Naive thymus-derived CD8-positive, alpha-beta T cell (primary cell): ENCODE measurements at regions of chr5 and their contacts with region 1.

Region 1: GRCh38 chr5:143033535-143034250 is 263.5 kb downstream of the ARHGAP26 start:
- DNase-seq: no peak
- ATAC-seq: no peak
- H3K4me3 Mint-ChIP-seq: no peak overlapping the region
- H3K27ac Mint-ChIP-seq: no peak overlapping the region
- H3K4me1 Mint-ChIP-seq: peaks cover 17 to 46% (median 33%) of the 10 kb centered on the region in 4 donors
- H3K27me3 Mint-ChIP-seq: no peaks in the 10 kb centered on the region

Region 2: DNA sequence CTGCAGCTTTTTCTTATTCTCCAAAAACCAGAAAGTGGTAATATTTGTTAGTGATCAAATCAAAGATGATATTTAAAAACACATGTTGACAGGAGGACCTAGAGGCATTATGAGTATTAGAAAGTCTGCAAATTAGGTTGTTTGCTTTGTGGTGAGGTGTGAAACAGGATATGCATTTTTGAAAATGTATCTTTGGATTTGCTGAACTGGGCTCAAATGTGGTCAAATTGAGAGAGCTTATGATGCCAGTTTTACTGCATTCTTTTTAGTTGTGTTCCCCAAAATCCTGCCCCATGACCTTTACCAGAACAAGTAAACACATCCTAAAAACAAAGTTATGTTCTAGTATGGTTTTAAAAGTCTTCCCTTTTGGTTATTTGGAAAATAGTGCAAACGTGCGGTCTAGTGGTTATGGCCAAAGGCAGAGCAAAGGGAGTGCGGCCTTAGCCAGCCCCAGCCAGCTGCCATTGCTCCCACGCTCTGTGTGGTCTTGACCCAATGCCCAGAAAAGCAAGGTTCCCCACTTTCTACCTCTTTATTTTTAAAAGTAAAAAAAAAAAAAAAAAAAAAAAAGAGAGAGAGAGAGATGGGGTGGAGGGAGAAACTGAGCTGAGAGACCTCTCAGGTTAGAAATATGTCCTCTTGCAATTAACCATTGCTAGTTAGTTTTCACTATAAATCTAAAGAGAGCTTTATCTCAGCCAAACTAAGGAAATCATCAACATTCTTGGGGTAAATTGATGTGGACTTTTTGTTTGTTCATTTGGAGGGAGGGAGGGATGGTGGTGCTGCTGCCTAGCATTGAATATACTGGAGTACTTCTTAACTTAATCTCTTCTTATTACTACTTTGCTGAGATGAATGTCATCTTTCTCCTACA is 86.9 kb before region 1 on chr5:
- POLR2A ChIA-PET with region 1: interaction called, 10 read pairs
- DNase-seq: no peak
- ATAC-seq: no peak
- H3K4me3 Mint-ChIP-seq: no peak overlapping the region
- H3K27ac Mint-ChIP-seq: peak overlapping the region in 1 of 10 donors; percentile 21
- H3K4me1 Mint-ChIP-seq: peaks cover 8 to 46% (median 30%) of the 10 kb centered on the region in 4 donors
- H3K27me3 Mint-ChIP-seq: no peaks in the 10 kb centered on the region

Region 3: DNA sequence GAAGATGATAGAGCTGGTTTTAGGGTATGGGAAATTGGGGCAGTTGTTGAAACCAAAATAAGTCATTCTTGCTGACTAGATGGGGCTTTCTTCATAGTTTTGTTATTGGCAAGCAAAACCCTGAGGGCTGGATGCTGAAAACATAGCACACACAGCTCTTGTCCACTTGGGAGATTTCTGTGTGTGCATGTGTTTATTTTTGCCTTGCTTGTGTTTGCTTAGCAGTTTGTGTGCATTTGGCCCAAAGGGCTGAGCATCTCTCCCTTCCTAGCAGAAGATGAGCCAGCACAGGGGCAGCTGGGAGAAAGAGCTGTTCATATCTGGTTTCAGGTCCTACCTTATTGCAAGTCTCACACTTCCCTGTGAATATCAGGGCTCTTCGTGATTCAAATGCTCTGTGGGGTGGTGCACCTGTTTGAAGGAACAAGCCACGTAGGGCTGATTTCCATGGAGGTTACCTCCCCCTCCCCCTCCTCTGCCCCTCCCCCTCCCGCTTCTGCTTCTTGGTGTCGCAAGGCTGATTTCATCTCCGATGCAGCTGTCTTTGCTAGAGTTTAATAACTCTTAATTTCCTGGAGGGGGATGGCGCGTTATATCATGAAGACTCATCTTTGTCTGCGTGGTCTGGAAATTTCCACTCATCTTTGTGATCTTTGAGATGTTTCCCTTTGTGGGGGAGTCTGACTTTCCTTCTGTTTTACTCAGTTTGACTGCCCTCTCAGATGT is 33.0 kb after region 1 on chr5:
- POLR2A ChIA-PET with region 1: no interaction called
- DNase-seq: no peak
- ATAC-seq: no peak
- H3K4me3 Mint-ChIP-seq: no peak overlapping the region
- H3K27ac Mint-ChIP-seq: peak overlapping the region in 1 of 10 donors; percentile 42
- H3K4me1 Mint-ChIP-seq: peaks cover 3 to 29% (median 12%) of the 10 kb centered on the region in 4 donors
- H3K27me3 Mint-ChIP-seq: no peaks in the 10 kb centered on the region